A549 (cell line): ENCODE measurements at regions of chr22 and their contacts with region 1.

Region 1: GRCh38 chr22:46533434-46533833 is 4.0 kb downstream of the CELSR1 start:
- DNase-seq: peak; percentile 77 to 87
- ATAC-seq: peak; percentile 51 to 81; a peak in 5 of 6 replicates
- H3K4me3 ChIP-seq: peak overlapping the region; percentile 53
- H3K27ac ChIP-seq: peak overlapping the region; percentile 87 to 91
- H3K4me1 ChIP-seq: peaks cover 51% of the 10 kb centered on the region
- CTCF ChIP-seq: peak; percentile 47
- EP300 ChIP-seq: no peak
- POLR2A ChIP-seq: no peak
- RAD21 ChIP-seq: peak; percentile 47 to 51; a peak in 4 of 5 replicates

Region 2: DNA sequence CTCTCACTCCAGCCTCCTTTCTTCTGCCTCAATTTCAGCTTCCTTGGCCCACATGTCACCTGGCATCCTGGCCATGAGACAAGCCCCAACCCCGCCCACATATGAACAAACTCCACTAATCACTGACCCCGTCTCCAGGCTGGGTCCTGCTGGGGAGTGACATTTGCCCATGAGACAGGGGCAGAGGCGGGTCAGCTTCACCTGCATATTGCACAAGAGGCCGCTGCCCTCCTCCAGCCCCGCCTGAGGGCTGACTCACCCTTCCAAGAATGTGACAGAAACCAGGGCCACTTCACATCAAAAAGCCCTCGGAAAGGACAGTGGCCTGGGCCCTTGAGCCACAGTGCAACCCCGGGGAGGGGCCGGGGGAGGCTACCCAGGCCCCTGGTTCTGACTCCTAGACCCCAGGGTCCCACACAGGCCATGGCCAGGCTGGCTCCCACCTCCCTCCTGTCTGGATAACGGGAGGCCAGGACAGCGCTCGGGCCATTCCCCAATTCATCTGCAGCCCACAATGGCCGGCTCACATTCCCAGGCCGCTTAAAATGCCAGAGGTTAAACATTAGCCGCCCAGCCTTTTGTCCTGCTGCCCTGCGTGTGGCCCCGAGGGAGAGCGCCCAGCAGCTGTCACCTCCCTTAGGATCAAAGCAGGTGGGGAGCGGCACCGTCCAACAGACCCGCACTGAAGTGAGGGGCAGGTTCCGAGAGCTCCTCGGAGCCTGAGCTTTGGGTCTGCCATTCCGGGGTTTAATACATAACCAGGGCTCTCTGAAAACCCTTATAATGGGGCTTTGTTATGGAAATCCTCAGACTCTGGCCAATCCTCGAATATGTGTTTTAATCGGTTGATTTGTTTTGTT is 155.6 kb before region 1 on chr22:
- CTCF ChIA-PET with region 1: interaction called, 12 read pairs
- POLR2A ChIA-PET with region 1: no interaction called
- DNase-seq: peak; percentile 89 to 92
- ATAC-seq: peak; percentile 74 to 82
- H3K4me3 ChIP-seq: no peak overlapping the region
- H3K27ac ChIP-seq: peak overlapping the region; percentile 91 to 93
- H3K4me1 ChIP-seq: peaks cover 51% of the 10 kb centered on the region
- CTCF ChIP-seq: no peak
- EP300 ChIP-seq: peak; percentile 23 to 69; a peak in 2 of 5 replicates
- POLR2A ChIP-seq: no peak
- RAD21 ChIP-seq: no peak

Region 3: DNA sequence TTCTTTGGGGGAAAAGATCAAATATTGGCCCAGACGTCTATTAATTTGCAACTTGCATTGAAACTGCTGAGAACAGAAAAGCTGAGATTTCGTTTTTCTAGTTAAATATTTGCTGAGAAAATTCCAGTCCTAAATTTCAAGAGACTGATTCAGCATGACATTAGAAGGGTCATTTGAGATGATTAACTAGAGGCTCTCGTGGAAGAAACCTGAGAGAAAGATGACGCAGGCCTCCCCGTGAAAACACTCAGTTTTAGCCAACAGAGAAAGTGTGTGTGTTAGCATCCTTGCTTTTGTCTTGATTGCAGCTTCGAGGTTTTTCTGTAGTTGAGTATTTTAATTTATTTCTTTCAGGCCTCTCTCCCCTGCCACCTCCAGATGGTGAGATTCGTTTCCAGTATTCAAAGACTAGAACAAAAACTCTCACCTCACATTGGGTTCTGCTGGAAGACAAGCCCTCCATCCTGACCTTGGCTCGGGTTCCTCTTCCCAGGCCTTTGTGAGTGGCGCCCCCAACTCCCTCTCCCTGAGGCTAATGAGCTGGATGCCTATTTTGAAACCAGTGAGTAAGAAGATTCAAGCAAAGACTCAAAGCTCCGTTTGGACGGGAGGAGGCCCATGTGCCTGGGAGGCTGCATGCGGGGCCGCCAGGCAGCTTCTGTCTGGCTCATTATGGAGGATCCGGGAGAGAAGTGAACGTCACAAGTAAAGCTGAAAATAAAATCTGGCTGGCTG is 48.4 kb before region 1 on chr22:
- CTCF ChIA-PET with region 1: interaction called, 18 read pairs
- POLR2A ChIA-PET with region 1: interaction called, 3 read pairs
- DNase-seq: peak; percentile 67 to 78
- ATAC-seq: peak; percentile 51 to 66
- H3K4me3 ChIP-seq: peak overlapping the region; percentile 11; the same call in 1 of the 3 replicates
- H3K27ac ChIP-seq: peak overlapping the region; percentile 96 to 98
- H3K4me1 ChIP-seq: peaks cover 82% of the 10 kb centered on the region
- CTCF ChIP-seq: no peak
- EP300 ChIP-seq: peak; percentile 40 to 71; a peak in 2 of 5 replicates
- POLR2A ChIP-seq: no peak
- RAD21 ChIP-seq: 0 out of 5 replicates have a peak, but pooled peaks of 1 of the 2 experiments have one; percentile 11

Region 4: DNA sequence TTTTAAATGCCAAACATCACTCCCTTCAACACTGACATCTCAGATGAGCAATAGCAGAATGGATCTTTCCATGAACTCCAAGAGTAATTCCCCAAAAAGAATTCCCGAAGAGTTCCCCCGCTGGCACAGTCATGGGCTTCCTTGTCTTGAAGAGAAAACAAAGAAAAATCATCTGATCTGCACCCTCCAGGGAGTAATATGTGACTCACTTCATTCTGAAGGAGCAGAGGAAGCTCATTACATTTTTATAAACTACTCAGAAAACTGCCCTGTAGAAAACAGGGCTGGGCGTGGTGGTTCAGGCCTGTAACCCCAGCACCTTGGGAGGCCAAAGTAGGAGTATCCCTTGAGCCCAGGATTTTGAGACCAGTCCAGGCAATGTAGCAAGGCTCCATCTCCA is 31.7 kb before region 1 on chr22:
- CTCF ChIA-PET with region 1: interaction called, 12 read pairs
- POLR2A ChIA-PET with region 1: interaction called, 6 read pairs
- DNase-seq: peak in 1 of 2 experiments; percentile 46
- ATAC-seq: peak; percentile 85 to 89
- H3K4me3 ChIP-seq: no peak overlapping the region
- H3K27ac ChIP-seq: peak overlapping the region; percentile 60 to 87
- H3K4me1 ChIP-seq: peaks cover 41% of the 10 kb centered on the region
- CTCF ChIP-seq: no peak
- EP300 ChIP-seq: no peak
- POLR2A ChIP-seq: no peak
- RAD21 ChIP-seq: no peak

Region 5: DNA sequence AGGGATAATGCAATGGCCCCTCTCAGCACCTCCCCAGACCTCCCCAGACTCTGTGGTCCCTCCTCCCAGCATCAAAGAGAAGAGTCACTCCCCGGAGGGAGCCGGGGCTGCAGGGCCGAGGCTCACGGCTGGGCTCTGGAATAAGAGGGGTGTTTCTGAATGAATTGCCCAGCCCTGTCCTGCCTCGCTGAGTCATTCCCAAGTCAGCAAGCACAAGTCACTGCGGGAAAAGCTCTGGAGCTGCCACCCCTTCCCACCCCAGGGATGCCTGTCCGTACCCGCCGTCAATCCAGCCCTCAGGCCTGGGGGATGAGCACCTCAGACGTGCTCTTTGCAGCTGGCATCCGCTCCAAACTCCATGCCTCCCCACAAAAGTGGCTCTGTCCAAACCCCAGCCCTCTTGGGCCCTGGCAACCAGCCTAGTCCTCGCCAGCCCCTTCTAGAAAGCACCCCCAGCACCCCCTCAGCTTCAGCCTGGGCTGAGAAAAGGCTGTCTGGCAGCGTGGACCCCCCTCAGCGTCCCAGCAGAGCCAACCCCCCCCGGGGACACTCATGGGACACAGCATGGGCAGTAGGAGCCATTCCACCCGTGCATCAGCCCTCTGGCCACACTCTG is 18.7 kb before region 1 on chr22:
- CTCF ChIA-PET with region 1: interaction called, 12 read pairs
- POLR2A ChIA-PET with region 1: interaction called, 6 read pairs
- DNase-seq: peak; percentile 64 to 72
- ATAC-seq: peak; percentile 89 to 93
- H3K4me3 ChIP-seq: 0 out of 3 replicates have a peak overlapping the region, but pooled peaks have one; percentile 21
- H3K27ac ChIP-seq: peak overlapping the region; percentile 91 to 96
- H3K4me1 ChIP-seq: peaks cover 23% of the 10 kb centered on the region
- CTCF ChIP-seq: no peak
- EP300 ChIP-seq: no peak
- POLR2A ChIP-seq: no peak
- RAD21 ChIP-seq: no peak